Posterior cingulate gyrus (tissue), 11 donors: ENCODE measurements at regions of chr18 and their contacts with region 1.

Region 1: DNA sequence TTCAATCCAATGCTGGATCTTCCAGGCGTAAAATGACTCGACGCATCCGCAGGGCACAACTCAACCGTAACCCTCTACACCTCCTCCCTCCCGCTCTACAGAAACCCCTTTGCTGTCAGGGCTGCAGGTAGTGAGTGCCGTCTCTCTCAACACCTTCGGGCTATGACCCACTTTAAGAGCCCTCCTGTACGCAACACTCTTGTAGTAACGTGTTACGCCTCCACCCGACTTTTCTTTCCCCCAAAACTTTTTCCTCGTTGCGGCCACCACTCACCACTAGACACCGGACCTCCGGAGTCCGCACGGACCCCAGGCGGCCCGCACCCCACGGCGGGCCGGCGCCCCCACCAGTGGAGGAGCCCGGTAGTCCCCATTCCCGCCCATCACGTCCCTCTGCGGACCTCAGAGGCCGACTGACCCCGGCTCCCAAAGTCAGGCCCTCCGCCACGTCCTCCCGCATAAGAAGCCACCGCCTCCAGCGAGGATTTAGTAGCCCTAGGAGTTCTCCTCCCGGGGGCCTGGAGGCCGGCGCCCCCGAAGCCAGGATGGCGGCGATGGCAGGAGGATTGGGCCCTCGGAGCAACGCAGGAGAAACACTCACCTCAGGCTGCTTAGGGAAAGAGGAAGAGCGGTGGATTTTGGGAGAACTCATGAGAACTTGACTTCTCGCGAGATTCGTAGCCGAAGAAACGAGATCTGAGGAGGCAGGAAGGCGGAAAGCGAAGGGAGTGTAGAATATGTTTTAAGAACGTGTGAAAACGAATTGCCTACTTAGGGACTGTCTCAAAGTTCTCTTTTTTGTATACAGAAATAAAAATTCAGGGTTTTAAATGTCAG is 5.0 kb upstream of the C18orf32 start:
- DNase-seq: peak; percentile 59 to 95 (median 80)

Region 2: DNA sequence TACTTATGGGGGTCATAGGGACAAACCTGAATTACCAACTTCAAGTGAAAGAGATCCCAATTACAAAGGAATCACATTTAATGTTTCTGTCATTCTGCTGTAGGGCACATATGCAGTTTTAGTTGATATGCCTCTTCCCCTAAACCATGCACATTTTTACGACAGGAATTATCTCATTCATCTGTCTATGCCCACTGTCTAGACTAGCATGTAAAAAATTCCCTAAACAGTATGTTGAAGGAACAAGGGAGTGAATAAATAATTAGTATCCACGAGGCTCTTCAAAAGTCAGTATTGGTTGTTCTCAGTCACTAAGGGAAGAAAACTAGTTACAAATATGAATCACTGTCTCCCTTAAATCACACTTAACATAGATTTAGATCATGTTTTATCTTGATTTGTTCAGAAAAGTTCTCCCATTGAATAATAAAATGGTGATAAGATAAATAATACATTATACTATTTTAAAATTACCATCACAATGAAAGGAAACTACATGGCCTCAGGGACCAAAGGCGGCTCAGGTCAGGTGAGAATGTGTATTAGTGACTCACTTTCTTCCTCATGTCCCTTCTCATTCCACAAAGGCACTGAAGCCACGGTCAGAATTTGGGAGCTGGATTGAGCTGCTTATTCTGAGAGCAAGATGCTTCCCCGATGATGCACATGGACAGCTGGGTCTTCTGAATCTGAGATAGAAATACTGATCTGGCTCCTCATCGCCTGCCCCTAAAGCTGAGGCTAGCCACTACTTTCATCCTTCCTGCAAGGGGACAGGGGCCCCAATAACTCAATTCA is 60.7 kb before region 1 on chr18:
- intact Hi-C with region 1: no loop called
- DNase-seq: no peak

Region 3: GRCh38 chr18:50277935-50278334 is 785.9 kb after region 1 on chr18:
- intact Hi-C with region 1: loop called (anchors 10 kb)
- DNase-seq: no peak